ENCODE measurements at regions of chr9 and their contacts with region 1.

Region 1: GRCh38 chr9:20908461-20908860 is 123.0 kb downstream of the HACD4 start:
- DNase-seq: no peak
- ATAC-seq: no peak
- H3K4me3 Mint-ChIP-seq: no peak overlapping the region
- H3K27ac Mint-ChIP-seq: no peak overlapping the region
- H3K4me1 Mint-ChIP-seq: no peaks in the 10 kb centered on the region
- H3K27me3 Mint-ChIP-seq: no peaks in the 10 kb centered on the region

Region 2: DNA sequence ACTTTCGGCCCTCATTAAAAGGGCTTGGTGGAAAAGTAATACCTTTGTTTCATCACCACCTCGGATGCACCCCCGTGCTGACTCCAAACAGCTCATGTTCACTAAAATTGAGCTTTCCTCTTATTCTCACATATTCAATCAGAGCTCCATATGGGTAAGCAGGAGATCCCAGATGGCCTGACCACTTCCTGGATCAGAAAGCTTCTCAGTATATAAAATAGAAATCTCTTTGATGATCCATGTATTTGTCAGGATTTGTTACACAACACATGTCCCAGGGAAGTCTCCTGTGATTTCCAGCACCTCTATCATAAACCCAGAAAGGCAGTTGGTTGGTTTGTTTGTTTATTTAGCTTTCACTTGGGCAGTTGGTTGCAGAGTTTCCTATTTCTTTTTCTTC is 688.2 kb before region 1 on chr9:
- CTCF ChIA-PET with region 1: no interaction called
- DNase-seq: no peak
- ATAC-seq: no peak
- H3K4me3 Mint-ChIP-seq: no peak overlapping the region
- H3K27ac Mint-ChIP-seq: no peak overlapping the region
- H3K4me1 Mint-ChIP-seq: peaks cover 21% of the 10 kb centered on the region
- H3K27me3 Mint-ChIP-seq: peaks cover 3% of the 10 kb centered on the region

Region 3: GRCh38 chr9:20884985-20885593 is 23.4 kb before region 1 on chr9:
- CTCF ChIA-PET with region 1: interaction called, 11 read pairs
- DNase-seq: peak; percentile 73
- ATAC-seq: peak; percentile 66
- H3K4me3 Mint-ChIP-seq: no peak overlapping the region
- H3K27ac Mint-ChIP-seq: no peak overlapping the region
- H3K4me1 Mint-ChIP-seq: no peaks in the 10 kb centered on the region
- H3K27me3 Mint-ChIP-seq: no peaks in the 10 kb centered on the region